SK-N-SH (cell line): ENCODE measurements at regions of chr2 and their contacts with region 1.

Region 1: DNA sequence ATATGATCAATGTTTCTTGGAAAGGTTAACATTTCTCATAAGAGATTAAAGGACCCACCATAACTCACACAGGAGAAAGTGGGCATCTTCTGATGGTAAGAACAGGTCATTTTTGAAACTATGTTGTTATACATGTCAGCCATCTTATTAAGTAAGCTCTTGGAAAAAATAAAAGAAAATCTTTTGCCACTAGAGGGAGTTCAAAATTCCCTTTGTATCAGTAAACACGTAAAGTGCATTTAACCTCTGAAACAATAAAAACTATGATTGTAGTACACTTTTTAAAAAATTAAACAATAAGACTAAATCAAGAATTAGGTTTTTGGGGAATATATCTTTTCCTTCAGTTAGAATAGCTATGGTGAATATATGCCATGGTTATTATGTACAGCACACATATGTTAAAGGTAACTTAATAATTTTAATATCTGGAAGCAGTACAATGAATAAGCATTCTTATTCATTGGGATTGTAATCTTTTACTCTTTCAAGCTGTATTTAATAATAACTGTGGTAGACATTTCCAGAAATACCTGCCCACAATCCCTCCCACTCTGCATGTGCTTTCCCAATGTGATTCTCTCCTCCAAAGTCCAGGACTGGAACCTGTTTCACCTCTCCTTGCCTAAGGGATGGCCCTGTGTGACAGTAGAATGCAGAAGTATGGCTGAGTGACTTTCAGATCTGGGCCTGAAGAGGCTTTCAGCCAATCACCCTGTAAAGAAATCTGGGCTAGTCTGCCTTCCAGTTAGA is 64.2 kb downstream of the RBMS1 start:
- DNase-seq: no peak
- H3K4me3 ChIP-seq: no peak overlapping the region; a peak in 1 of 4 replicates
- H3K27ac ChIP-seq: peak overlapping the region; percentile 39 to 64
- H3K4me1 ChIP-seq: peaks cover 17 to 40% of the 10 kb centered on the region in 2 experiments; a peak in 3 of 4 replicates
- H3K27me3 ChIP-seq: no peaks in the 10 kb centered on the region
- CTCF ChIP-seq: peak; percentile 77
- EP300 ChIP-seq: no peak
- RAD21 ChIP-seq: peak; percentile 64

Region 2: GRCh38 chr2:160324161-160324800 is 105.1 kb before region 1 on chr2:
- CTCF ChIA-PET with region 1: interaction called, 13 read pairs
- POLR2A ChIA-PET with region 1: no interaction called
- DNase-seq: peak; percentile 39
- H3K4me3 ChIP-seq: no peak overlapping the region
- H3K27ac ChIP-seq: 0 out of 4 replicates have a peak overlapping the region, but pooled peaks of 1 of the 2 experiments have one; percentile 20
- H3K4me1 ChIP-seq: peaks cover 0 to 3% of the 10 kb centered on the region in 2 experiments; a peak in 3 of 4 replicates
- H3K27me3 ChIP-seq: no peaks in the 10 kb centered on the region
- CTCF ChIP-seq: peak; percentile 81
- EP300 ChIP-seq: no peak
- RAD21 ChIP-seq: peak; percentile 80

Region 3: DNA sequence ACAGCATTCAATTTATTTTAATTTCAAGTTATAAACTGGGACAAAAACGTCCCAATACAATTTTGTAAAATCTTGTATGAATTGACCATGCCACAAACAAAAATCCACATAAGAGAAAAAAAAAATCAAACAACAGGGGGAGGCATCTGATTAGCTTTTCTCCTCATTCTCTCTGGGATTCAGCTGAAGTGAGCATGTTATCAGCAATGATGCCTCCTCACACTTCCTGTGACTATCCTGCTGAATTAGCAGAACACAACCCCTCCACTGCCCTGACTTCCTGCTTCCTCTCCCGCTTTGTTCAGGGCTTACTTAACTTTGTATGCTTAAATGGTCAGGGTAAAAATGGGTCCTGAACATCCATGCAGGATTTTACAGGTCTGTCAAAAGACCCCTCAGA is 97.1 kb before region 1 on chr2:
- CTCF ChIA-PET with region 1: interaction called, 12 read pairs
- POLR2A ChIA-PET with region 1: no interaction called
- DNase-seq: peak; percentile 37
- H3K4me3 ChIP-seq: no peak overlapping the region
- H3K27ac ChIP-seq: peak overlapping the region in 1 of 2 experiments; percentile 1; a peak in 1 of 4 replicates
- H3K4me1 ChIP-seq: peaks cover 5 to 32% of the 10 kb centered on the region in 2 experiments; a peak in 3 of 4 replicates
- H3K27me3 ChIP-seq: no peaks in the 10 kb centered on the region
- CTCF ChIP-seq: peak; percentile 24
- EP300 ChIP-seq: no peak
- RAD21 ChIP-seq: peak; percentile 68

Region 4: GRCh38 chr2:160411167-160411566 is 18.3 kb before region 1 on chr2:
- CTCF ChIA-PET with region 1: interaction called, 40 read pairs
- POLR2A ChIA-PET with region 1: no interaction called
- DNase-seq: no peak
- H3K4me3 ChIP-seq: no peak overlapping the region
- H3K27ac ChIP-seq: peak overlapping the region; percentile 22 to 53; a peak in 3 of 4 replicates
- H3K4me1 ChIP-seq: peaks cover 7 to 37% of the 10 kb centered on the region in 2 experiments
- H3K27me3 ChIP-seq: no peaks in the 10 kb centered on the region
- CTCF ChIP-seq: no peak
- EP300 ChIP-seq: peak in 1 of 2 experiments; percentile 47; a peak in 1 of 4 replicates
- RAD21 ChIP-seq: no peak